T-cell (primary cell): ENCODE measurements at regions of chr19 and their contacts with region 1.

Region 1: GRCh38 chr19:2648528-2648937 is 54.0 kb downstream of the GNG7 start:
- DNase-seq: peak; percentile 37 to 85 (median 69)
- ATAC-seq: peak; percentile 77 to 92 (median 87)
- H3K4me3 ChIP-seq: no peak overlapping the region
- H3K4me3 Mint-ChIP-seq: no peak overlapping the region
- H3K27ac ChIP-seq: no peak overlapping the region
- H3K27ac Mint-ChIP-seq: no peak overlapping the region
- H3K4me1 ChIP-seq: no peaks in the 10 kb centered on the region
- H3K4me1 Mint-ChIP-seq: no peaks in the 10 kb centered on the region
- H3K27me3 ChIP-seq: peaks cover 0 to 18% of the 10 kb centered on the region in 2 experiments
- H3K27me3 Mint-ChIP-seq: no peaks in the 10 kb centered on the region

Region 2: DNA sequence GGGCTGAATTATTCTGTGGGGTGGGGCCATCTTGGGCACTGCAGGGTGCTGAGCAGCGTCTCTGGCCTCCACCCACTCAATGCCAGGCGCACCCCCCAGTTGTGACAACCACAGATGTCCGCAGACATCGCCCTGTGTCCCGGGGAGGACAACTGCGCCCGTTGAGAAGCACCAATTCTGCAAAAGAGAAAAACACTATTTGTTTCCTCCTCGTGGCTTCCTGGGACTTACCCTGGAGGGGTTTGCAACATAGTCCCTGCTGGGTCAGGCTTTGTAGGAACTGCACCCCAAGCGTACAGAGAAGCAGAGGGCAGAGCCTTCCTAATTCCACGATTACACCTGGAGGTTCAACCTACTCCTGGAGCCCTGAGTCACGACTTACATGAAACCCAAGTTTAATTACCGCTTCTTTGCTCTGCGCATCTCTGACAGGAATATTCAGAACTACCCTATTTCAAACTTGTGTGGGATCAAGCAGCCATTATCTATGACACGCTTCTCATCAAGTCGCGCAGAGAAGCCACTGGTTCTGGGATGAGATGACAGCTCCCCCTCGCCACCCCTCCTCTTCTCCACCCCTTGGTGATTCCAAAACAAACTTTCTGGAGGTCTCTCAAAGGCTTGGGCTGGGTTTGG is 102.4 kb after region 1 on chr19:
- CTCF ChIA-PET with region 1: interaction called, 4 to 17 read pairs
- POLR2A ChIA-PET with region 1: no interaction called
- DNase-seq: no peak
- ATAC-seq: no peak
- H3K4me3 ChIP-seq: no peak overlapping the region
- H3K4me3 Mint-ChIP-seq: no peak overlapping the region
- H3K27ac ChIP-seq: no peak overlapping the region
- H3K27ac Mint-ChIP-seq: no peak overlapping the region
- H3K4me1 ChIP-seq: peaks cover 0 to 7% of the 10 kb centered on the region in 2 experiments
- H3K4me1 Mint-ChIP-seq: no peaks in the 10 kb centered on the region
- H3K27me3 ChIP-seq: peaks cover 0 to 13% of the 10 kb centered on the region in 2 experiments
- H3K27me3 Mint-ChIP-seq: no peaks in the 10 kb centered on the region

Region 3: DNA sequence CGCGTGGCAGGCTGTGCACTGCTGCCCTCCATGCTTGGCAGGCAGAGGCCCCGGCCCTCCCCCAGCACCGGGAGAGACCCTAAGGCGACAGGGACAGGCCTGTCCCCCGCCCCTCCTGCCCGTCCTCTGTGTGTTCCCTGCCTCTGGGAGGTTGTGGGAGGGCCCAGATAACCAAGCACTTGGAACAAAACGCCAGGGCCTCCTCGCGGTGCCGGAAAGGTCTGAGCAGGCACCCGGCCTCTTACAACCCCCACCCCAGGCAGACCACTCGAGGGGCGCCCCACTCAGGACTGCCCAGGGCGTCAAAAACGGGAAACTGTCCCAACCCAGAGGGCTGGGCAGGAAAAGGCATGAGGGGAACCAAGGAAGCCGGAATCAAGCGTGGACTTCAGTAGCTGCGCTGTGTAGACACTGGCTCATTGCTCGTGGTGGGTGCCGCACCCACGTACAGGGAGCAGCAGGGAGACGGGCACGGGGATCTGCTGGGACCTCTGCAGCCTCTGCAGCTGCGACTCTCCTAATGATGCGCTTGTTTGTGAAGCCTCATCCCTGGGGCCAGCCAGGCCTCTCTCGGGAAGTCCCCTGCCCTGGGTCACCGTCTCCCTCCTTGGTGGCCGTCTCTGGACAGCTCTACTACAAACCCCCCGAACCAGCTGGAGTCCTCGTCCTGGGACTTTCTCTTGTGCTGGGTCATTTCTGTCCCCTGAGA is 465.6 kb after region 1 on chr19:
- CTCF ChIA-PET with region 1: no interaction called
- POLR2A ChIA-PET with region 1: interaction called in 1 of 2 experiments, 12 read pairs
- DNase-seq: no peak
- ATAC-seq: no peak
- H3K4me3 ChIP-seq: no peak overlapping the region
- H3K4me3 Mint-ChIP-seq: no peak overlapping the region
- H3K27ac ChIP-seq: no peak overlapping the region
- H3K27ac Mint-ChIP-seq: no peak overlapping the region
- H3K4me1 ChIP-seq: no peaks in the 10 kb centered on the region
- H3K4me1 Mint-ChIP-seq: peaks cover 0 to 10% (median 0%) of the 10 kb centered on the region in 3 donors
- H3K27me3 ChIP-seq: no peaks in the 10 kb centered on the region
- H3K27me3 Mint-ChIP-seq: no peaks in the 10 kb centered on the region